Activated T-helper 2 cell treated with anti-CD3 and anti-CD28 coated beads, Interferon-gamma antibody, Interleukin-2, Interleukin-4, amounts not matched to agents 10 μg/mL and 5 μg/mL and 100 μg/mL, durations not matched to agents 14 hours and 24 hours and 36 hours (primary cell): ENCODE measurements at regions of chr16 and their contacts with region 1.

Region 1: GRCh38 chr16:57042157-57043111 is 49.9 kb upstream of the CPNE2 start:
- DNase-seq: peak; percentile 67
- H3K4me3 Mint-ChIP-seq: peak overlapping the region; percentile 62
- H3K27ac Mint-ChIP-seq: peak overlapping the region; percentile 94
- H3K4me1 Mint-ChIP-seq: peaks cover 60% of the 10 kb centered on the region
- H3K27me3 Mint-ChIP-seq: no peaks in the 10 kb centered on the region

Region 2: DNA sequence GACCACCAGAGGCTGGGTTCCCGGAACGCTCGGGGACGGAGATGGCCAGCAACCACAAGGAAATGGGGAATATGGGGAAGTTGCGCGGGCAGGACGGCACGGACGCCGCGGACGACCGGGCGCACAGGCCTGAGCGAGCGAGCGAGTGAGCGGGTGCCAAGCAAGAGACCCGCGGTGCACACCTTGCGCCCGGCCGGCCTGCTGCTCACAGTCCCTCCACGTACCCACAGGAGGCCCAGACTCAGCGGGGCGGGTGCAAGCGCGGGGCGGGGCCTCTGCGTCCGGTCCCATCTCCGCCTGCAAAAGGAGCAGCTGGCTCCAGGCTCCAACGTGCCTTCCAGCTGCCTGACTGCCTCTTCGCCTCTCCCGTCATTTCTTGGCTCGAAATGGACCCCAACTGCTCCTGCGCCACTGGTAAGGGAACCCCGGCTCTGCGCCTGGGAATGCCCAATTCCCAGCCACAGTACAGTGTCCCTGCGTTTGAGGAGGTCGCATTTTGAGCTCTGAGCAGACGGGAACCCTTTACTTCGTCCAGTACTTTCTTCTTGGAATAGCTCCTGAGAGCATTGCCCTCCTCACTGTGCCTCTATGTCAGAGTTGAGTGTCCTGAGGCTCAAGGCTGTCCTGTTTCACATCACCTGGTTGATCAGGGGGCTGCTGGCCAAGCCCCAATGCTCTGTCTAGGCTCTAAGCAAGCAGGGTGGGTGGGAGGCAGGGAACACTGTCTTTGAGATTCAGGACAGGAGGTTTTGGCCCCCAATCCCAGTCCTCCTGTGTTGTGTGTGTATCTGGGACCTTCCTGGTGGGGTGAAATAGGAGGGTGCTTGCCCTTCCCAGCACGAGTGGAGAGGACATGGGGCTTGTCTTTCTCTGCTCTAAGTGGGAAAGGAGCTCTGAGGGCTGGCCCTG is 425.0 kb before region 1 on chr16:
- intact Hi-C with region 1: loop called (anchors 1 kb)
- DNase-seq: peak; percentile 64
- H3K4me3 Mint-ChIP-seq: peak overlapping the region; percentile 87
- H3K27ac Mint-ChIP-seq: peak overlapping the region; percentile 68
- H3K4me1 Mint-ChIP-seq: peaks cover 49% of the 10 kb centered on the region
- H3K27me3 Mint-ChIP-seq: no peaks in the 10 kb centered on the region

Region 3: DNA sequence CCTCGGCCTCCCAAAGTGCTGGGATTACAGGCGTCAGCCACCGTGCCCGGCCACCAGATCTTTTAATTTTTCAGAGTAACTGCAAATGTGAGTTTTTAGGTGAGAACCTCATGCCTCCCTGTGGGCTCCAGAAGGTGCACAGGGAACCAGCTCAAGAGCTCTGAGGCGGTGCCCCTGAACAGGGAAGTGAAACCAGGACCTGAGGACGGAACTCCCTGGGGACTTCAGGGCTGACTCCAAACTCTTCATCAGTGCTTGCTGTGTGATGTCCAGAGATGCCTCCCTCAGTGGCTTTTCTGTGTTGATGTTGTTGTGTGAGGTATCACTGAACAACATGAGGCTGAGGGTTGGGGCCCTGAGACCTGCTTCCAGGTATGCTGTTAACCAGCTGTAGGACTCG is 153.6 kb before region 1 on chr16:
- intact Hi-C with region 1: no loop called
- DNase-seq: no peak
- H3K4me3 Mint-ChIP-seq: no peak overlapping the region
- H3K27ac Mint-ChIP-seq: no peak overlapping the region
- H3K4me1 Mint-ChIP-seq: no peaks in the 10 kb centered on the region
- H3K27me3 Mint-ChIP-seq: no peaks in the 10 kb centered on the region

Region 4: GRCh38 chr16:56944954-56945839 is 97.2 kb before region 1 on chr16:
- intact Hi-C with region 1: loop called (anchors 1 kb)
- DNase-seq: no peak
- H3K4me3 Mint-ChIP-seq: no peak overlapping the region
- H3K27ac Mint-ChIP-seq: peak overlapping the region; percentile 87
- H3K4me1 Mint-ChIP-seq: peaks cover 36% of the 10 kb centered on the region
- H3K27me3 Mint-ChIP-seq: no peaks in the 10 kb centered on the region

Region 5: GRCh38 chr16:56964243-56965148 is 77.9 kb before region 1 on chr16:
- intact Hi-C with region 1: loop called (anchors 1 kb)
- DNase-seq: peak; percentile 89
- H3K4me3 Mint-ChIP-seq: no peak overlapping the region
- H3K27ac Mint-ChIP-seq: peak overlapping the region; percentile 36
- H3K4me1 Mint-ChIP-seq: peaks cover 18% of the 10 kb centered on the region
- H3K27me3 Mint-ChIP-seq: peaks cover 2% of the 10 kb centered on the region